ENCODE measurements at regions of chr20 and their contacts with region 1.

Region 1: GRCh38 chr20:51650685-51651134 is 108.2 kb upstream of the NFATC2 start:
- DNase-seq: no peak
- ATAC-seq: no peak
- H3K4me3 ChIP-seq: no peak overlapping the region
- H3K27ac ChIP-seq: peak overlapping the region in 1 of 10 donors; percentile 26
- H3K4me1 ChIP-seq: peaks cover 0 to 21% (median 0%) of the 10 kb centered on the region in 9 donors
- H3K27me3 ChIP-seq: no peaks in the 10 kb centered on the region
- CTCF ChIP-seq: no peak

Region 2: GRCh38 chr20:51687062-51687461 is 36.4 kb after region 1 on chr20:
- intact Hi-C with region 1: no loop called
- DNase-seq: no peak
- ATAC-seq: no peak
- H3K4me3 ChIP-seq: no peak overlapping the region
- H3K27ac ChIP-seq: no peak overlapping the region
- H3K4me1 ChIP-seq: no peaks in the 10 kb centered on the region
- H3K27me3 ChIP-seq: no peaks in the 10 kb centered on the region
- CTCF ChIP-seq: no peak

Region 3: GRCh38 chr20:51767010-51767558 is 116.4 kb after region 1 on chr20:
- intact Hi-C with region 1: loop called in 2 of 10 experiments (anchors 10 kb)
- DNase-seq: peak; percentile 49 to 70
- ATAC-seq: peak; percentile 82 to 97 (median 92)
- H3K4me3 ChIP-seq: peak overlapping the region; percentile 26 to 93 (median 84)
- H3K27ac ChIP-seq: peak overlapping the region in 6 of 10 donors; percentile 11 to 79 (median 65)
- H3K4me1 ChIP-seq: peaks cover 0 to 19% (median 6%) of the 10 kb centered on the region in 9 donors
- H3K27me3 ChIP-seq: peaks cover 0 to 36% (median 0%) of the 10 kb centered on the region in 7 donors
- CTCF ChIP-seq: no peak